ENCODE measurements at regions of chr6 and their contacts with region 1.

Region 1: DNA sequence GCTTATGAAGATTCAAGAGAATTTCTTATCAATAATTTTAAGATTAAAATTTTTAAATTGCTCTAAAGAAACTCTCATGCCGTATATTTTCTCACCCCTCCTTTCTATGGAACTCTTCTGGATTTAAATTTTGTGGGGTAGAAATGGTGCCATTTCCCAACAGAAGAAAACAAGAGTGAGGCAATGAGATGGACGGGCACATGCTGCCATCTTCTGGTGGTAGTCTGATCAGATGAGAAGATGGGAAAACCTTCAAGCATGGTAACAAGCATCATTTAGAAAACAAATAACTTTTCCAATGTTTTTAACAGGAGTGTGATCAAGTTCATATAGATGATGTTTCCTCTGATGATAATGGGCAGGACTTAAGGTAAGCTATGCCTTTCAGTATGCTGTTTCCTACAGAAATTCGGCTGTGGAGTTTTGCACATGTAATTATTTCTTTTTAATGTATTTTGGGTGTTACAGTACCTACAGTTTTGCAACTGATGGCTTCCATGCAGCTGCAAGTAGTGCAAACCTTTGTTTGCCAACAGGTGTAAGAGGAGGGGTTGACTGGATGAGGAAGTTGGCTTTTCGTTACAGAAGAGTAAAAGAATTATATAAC is 271.4 kb downstream of the EYA4 start:
- DNase-seq: peak; percentile 65
- H3K4me3 Mint-ChIP-seq: no peak overlapping the region
- H3K27ac Mint-ChIP-seq: no peak overlapping the region
- H3K4me1 Mint-ChIP-seq: no peaks in the 10 kb centered on the region
- H3K27me3 Mint-ChIP-seq: peaks cover 76% of the 10 kb centered on the region
- CTCF ChIP-seq: peak; percentile 67

Region 2: DNA sequence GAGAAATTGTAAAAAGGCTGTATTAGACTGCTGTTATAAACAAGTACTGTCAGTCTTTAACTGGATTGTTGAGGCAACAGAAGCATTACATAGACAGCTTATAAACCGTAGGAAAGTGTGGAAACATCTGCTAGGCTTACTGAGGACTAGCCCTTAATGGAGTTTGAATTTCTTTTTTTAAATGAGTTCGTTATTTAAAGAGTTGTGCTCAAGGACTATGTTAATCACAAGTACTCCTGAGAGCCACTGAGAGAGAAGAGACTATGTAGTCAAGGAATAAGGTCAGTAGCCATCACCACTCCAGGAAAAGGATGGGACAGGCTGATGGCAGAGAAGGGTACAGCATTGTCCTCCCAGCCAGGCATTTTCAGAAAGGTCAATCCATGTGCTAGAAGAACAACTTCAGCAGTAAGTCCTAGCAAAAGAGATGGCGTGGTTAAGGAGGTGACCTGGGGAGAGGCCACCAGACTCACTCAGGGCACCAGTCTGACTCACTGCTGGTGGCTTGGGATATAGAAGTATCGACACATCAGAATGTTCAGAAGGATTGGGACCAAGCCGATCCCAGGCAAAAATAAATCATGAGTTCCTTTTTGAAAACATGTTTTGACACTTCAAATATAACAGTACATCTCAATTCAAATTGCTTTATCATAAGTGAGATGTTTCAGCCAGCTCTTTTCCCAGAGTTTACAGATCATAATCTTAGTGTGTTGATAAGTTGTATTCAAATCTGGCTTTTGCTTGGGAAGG is 691.7 kb before region 1 on chr6:
- CTCF ChIA-PET with region 1: interaction called, 6 read pairs
- POLR2A ChIA-PET with region 1: no interaction called
- intact Hi-C with region 1: loop called (anchors 2 kb)
- DNase-seq: peak; percentile 46
- H3K4me3 Mint-ChIP-seq: no peak overlapping the region
- H3K27ac Mint-ChIP-seq: peak overlapping the region; percentile 73
- H3K4me1 Mint-ChIP-seq: peaks cover 36% of the 10 kb centered on the region
- H3K27me3 Mint-ChIP-seq: no peaks in the 10 kb centered on the region
- CTCF ChIP-seq: no peak

Region 3: GRCh38 chr6:132830334-132830751 is 682.2 kb before region 1 on chr6:
- CTCF ChIA-PET with region 1: interaction called, 10 read pairs
- POLR2A ChIA-PET with region 1: no interaction called
- intact Hi-C with region 1: loop called (anchors 1 kb)
- DNase-seq: peak; percentile 45
- H3K4me3 Mint-ChIP-seq: no peak overlapping the region
- H3K27ac Mint-ChIP-seq: no peak overlapping the region
- H3K4me1 Mint-ChIP-seq: no peaks in the 10 kb centered on the region
- H3K27me3 Mint-ChIP-seq: peaks cover 19% of the 10 kb centered on the region
- CTCF ChIP-seq: peak; percentile 41

Region 4: DNA sequence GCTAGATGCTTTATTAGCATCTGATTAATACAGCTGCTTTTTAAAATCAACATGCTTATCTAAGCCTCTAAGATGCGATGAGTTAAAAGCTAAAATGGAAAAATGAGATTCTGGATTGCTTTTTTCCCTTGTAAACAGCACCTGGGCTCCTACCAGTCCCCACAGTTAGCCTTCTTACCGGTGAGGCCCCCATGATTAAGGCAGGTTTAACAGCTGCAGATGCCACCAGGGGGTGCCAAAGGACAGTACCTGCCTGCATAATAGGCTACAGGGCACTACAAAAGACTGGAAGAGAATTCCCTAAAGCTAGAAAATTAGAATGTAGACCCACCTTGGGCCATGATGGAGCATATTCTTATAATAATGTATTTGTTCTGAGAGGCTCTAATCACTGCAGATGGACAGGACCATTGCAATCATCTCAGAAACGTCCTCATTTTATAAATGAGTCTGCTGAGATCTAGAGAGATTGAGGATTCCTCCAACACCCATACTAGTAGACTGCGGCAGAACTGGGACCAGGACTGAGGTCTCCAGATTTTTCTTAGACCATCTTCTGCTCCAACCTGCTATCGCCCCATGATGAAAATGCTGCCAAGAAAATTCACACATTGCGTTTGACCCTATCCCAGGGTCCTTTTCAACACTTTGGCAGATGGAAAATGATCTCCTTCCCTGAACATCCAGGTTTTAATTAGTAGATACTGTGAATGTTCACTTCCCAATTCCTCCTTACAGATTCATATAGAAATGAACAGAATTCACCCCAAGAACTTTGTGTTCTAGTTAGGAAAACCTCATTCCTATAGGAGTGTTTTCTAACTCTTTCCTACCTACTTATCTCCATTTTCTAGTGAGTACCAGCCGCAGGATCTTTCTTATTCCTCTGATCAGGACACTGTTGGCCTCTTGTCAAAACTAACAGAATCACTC is 549.3 kb before region 1 on chr6:
- CTCF ChIA-PET with region 1: interaction called, 7 read pairs
- POLR2A ChIA-PET with region 1: no interaction called
- intact Hi-C with region 1: loop called (anchors 1 kb)
- DNase-seq: peak; percentile 71
- H3K4me3 Mint-ChIP-seq: no peak overlapping the region
- H3K27ac Mint-ChIP-seq: no peak overlapping the region
- H3K4me1 Mint-ChIP-seq: peaks cover 10% of the 10 kb centered on the region
- H3K27me3 Mint-ChIP-seq: peaks cover 68% of the 10 kb centered on the region
- CTCF ChIP-seq: peak; percentile 81

Region 5: DNA sequence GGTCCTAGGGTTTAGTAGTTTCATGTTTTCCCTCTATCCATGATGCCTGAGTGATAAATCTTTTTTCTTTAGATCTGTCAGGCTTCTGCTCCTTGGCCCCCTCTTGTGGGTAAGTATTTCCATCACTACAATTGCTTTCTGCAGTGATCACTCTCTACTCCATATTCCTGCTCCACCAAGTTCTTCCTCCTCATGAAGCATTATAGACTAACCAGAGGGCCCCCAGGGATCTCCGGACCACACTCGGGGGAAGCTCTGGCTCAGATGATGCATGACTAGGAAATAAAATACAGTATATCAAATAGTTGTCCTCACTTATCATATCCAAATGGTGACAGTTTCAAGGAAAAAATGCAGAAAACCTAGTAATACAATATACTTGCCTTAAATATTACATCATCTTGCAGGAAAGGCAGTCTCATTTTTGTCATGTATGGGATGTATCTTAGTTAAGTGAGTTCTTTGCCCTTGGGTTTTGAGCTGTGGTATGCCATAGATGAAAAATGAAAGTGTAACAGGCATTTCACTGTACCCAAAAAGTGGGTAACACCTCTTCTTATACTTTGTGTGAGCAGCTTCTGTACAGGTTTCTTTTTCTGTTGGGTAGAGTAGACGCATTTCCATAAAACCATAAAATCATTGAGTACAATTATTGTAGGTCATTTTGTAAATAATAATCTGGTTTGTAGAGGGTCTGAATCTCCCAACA is 472.3 kb before region 1 on chr6:
- CTCF ChIA-PET with region 1: interaction called, 3 read pairs
- POLR2A ChIA-PET with region 1: no interaction called
- intact Hi-C with region 1: loop called (anchors 5 kb)
- DNase-seq: peak; percentile 27
- H3K4me3 Mint-ChIP-seq: no peak overlapping the region
- H3K27ac Mint-ChIP-seq: no peak overlapping the region
- H3K4me1 Mint-ChIP-seq: no peaks in the 10 kb centered on the region
- H3K27me3 Mint-ChIP-seq: peaks cover 60% of the 10 kb centered on the region
- CTCF ChIP-seq: peak; percentile 58

Region 6: DNA sequence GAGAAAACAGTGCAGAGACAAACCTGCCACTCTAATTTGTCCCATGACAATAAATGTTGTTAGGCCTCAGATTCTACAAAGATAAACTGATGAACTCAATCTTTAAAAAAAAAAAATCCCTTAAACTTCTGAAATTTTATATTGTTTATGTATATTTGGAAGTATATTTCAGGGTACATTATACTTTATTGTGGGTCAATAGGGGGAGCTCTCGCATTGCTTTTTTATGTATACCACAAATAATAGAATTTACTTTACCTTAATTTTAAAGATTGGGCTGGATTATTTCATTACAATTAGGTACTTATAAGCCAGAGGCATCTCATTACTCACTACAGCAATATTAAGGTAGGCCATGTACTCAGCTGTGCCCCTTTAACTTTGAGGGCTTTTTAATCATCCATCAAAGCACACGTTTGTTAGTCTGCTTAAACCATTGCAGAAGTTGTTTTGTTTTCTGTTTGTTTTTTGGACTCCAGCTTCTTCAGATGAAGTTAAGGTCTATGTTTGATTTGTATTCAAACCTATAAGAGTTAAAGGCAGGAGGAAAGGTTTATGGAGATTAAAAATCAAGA is 327.6 kb before region 1 on chr6:
- CTCF ChIA-PET with region 1: interaction called, 10 read pairs
- POLR2A ChIA-PET with region 1: no interaction called
- intact Hi-C with region 1: loop called (anchors 1 kb)
- DNase-seq: peak; percentile 22
- H3K4me3 Mint-ChIP-seq: no peak overlapping the region
- H3K27ac Mint-ChIP-seq: no peak overlapping the region
- H3K4me1 Mint-ChIP-seq: no peaks in the 10 kb centered on the region
- H3K27me3 Mint-ChIP-seq: peaks cover 73% of the 10 kb centered on the region
- CTCF ChIP-seq: peak; percentile 55

Region 7: GRCh38 chr6:133286765-133287164 is 225.7 kb before region 1 on chr6:
- CTCF ChIA-PET with region 1: no interaction called
- POLR2A ChIA-PET with region 1: no interaction called
- intact Hi-C with region 1: loop called (anchors 2 kb)
- DNase-seq: peak; percentile 30
- H3K4me3 Mint-ChIP-seq: no peak overlapping the region
- H3K27ac Mint-ChIP-seq: no peak overlapping the region
- H3K4me1 Mint-ChIP-seq: no peaks in the 10 kb centered on the region
- H3K27me3 Mint-ChIP-seq: peaks cover 70% of the 10 kb centered on the region
- CTCF ChIP-seq: peak; percentile 17

Region 8: GRCh38 chr6:134145786-134146185 is 633.3 kb after region 1 on chr6:
- CTCF ChIA-PET with region 1: no interaction called
- POLR2A ChIA-PET with region 1: no interaction called
- intact Hi-C with region 1: no loop called
- DNase-seq: no peak
- H3K4me3 Mint-ChIP-seq: no peak overlapping the region
- H3K27ac Mint-ChIP-seq: no peak overlapping the region
- H3K4me1 Mint-ChIP-seq: no peaks in the 10 kb centered on the region
- H3K27me3 Mint-ChIP-seq: no peaks in the 10 kb centered on the region
- CTCF ChIP-seq: no peak